ENCODE measurements at regions of chr20 and their contacts with region 1.

Region 1: DNA sequence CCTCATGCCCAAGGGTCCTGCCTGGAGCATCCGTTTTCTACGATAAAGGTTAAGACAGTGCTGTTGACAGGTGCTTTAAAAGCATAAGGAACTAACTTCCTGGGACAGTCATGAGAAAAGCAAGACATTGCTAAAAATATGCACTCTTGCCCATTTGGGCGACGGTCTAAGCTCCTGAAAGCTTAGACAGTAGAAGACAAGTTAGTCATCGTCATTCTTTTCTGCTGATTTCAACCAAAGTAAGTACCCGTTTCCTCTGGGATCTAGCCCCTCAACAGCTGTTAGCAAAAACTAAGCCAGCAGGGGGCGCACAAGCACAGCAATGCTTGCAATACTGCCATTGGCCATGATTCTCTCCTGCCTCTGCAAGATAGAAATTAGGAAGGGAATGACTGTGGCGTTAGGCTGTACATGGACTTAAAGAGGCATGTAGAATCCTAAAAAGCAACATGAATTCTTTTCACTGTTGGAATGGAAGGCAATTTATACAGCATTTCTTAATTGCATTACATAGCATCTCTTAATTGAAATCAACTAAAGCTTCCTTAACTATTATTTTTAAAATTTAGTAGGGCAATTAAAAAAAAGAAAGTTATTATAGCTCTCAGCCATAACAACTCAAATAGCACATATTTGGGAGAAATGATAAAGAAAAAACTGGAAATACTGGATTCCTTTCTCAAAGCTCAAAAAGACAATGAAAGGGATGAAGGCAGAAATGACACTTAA is 147.8 kb upstream of the RALGAPA2 start:
- DNase-seq: peak; percentile 87 to 92
- ATAC-seq: peak; percentile 93 to 97
- H3K4me3 ChIP-seq: no peak overlapping the region
- H3K27ac ChIP-seq: no peak overlapping the region
- H3K4me1 ChIP-seq: no peaks in the 10 kb centered on the region
- CTCF ChIP-seq: peak; percentile 95
- EP300 ChIP-seq: no peak
- POLR2A ChIP-seq: no peak
- RAD21 ChIP-seq: peak; percentile 81 to 88

Region 2: DNA sequence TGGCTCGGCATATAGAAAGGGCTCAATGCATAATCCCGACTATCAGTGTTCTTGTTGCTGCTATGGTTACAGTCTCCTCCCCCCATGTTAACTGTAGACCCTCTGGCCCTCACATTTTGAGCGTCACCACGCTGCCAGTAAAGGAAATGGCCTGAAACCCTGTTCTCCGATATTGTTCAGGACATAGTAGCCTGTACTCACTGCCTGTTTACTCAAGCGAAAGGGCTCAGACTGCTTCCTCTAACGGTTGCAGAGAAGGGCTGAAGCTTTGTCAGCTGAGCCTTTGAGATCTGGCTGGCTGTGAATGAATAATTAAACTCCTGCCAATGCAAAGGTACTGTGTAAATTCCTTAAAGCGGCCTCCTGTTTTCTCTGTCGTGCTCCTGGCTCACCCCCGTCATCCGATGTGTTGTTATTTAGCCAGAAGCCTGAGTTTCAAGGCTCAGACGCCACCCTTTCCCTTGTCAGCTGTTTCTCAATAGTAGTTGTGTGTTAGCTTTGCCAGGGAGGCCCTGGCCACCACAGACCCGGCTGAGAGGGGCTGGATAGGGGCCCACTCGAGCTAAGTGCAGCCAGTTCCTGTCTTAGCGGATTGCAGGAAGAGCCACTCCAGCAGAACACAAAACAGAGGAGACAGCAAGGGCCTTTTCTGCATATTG is 116.6 kb before region 1 on chr20:
- CTCF ChIA-PET with region 1: no interaction called
- POLR2A ChIA-PET with region 1: no interaction called
- DNase-seq: no peak
- ATAC-seq: no peak
- H3K4me3 ChIP-seq: no peak overlapping the region
- H3K27ac ChIP-seq: no peak overlapping the region
- H3K4me1 ChIP-seq: no peaks in the 10 kb centered on the region
- CTCF ChIP-seq: no peak
- EP300 ChIP-seq: no peak
- POLR2A ChIP-seq: no peak
- RAD21 ChIP-seq: no peak

Region 3: GRCh38 chr20:20837574-20838021 is 22.6 kb before region 1 on chr20:
- CTCF ChIA-PET with region 1: interaction called, 53 read pairs
- POLR2A ChIA-PET with region 1: no interaction called
- DNase-seq: peak; percentile 59 to 65
- ATAC-seq: peak; percentile 80 to 89; a peak in 5 of 6 replicates
- H3K4me3 ChIP-seq: no peak overlapping the region
- H3K27ac ChIP-seq: no peak overlapping the region
- H3K4me1 ChIP-seq: no peaks in the 10 kb centered on the region
- CTCF ChIP-seq: peak; percentile 85
- EP300 ChIP-seq: no peak
- POLR2A ChIP-seq: no peak
- RAD21 ChIP-seq: peak; percentile 85 to 89

Region 4: DNA sequence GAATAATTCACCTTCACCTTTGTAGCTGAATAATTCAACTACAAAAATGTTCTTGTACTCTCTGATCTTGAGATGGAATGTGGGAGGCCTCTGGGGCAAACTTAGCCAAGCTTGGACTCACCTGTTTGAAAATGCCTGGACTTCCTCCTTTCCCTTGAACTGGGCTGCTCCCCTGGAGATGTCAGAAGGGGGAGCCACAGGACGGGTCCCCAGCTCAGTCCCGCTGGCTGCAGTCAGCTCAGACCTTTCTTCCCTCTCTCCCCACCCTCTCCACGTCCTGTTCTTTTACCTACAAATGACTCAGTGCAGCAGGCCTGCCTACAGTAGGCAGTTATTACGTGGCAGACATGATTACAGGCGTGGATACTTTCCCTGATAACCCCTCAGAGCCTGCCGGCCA is 16.3 kb before region 1 on chr20:
- CTCF ChIA-PET with region 1: interaction called, 53 read pairs
- POLR2A ChIA-PET with region 1: no interaction called
- DNase-seq: no peak
- ATAC-seq: peak in 1 of 2 experiments; percentile 53; a peak in 2 of 6 replicates
- H3K4me3 ChIP-seq: no peak overlapping the region
- H3K27ac ChIP-seq: no peak overlapping the region
- H3K4me1 ChIP-seq: no peaks in the 10 kb centered on the region
- CTCF ChIP-seq: no peak
- EP300 ChIP-seq: no peak
- POLR2A ChIP-seq: no peak
- RAD21 ChIP-seq: no peak

Region 5: DNA sequence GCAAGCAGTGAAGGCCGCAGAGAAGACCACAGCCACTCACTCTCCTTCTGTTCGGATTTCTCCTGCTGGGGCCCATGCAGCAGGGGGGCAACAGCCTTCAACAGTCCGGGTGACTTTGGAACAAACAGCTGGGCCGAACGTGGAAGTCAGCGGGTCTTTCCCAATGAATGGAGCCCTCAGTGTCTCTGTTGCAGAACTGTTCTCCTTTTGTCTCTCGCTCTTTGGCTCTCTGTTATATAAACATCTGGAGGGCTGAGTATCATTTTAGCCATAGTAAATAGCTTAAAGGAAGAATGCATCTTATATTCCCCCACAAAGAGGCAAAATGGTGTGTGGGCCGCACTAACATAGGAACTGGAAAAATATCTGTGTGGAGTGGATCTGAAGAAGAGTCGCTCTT is 11.1 kb before region 1 on chr20:
- CTCF ChIA-PET with region 1: interaction called, 48 read pairs
- POLR2A ChIA-PET with region 1: no interaction called
- DNase-seq: no peak
- ATAC-seq: no peak
- H3K4me3 ChIP-seq: no peak overlapping the region
- H3K27ac ChIP-seq: no peak overlapping the region
- H3K4me1 ChIP-seq: no peaks in the 10 kb centered on the region
- CTCF ChIP-seq: no peak
- EP300 ChIP-seq: no peak
- POLR2A ChIP-seq: no peak
- RAD21 ChIP-seq: no peak

Region 6: GRCh38 chr20:20875716-20876115 is 15.5 kb after region 1 on chr20:
- CTCF ChIA-PET with region 1: interaction called, 28 read pairs
- POLR2A ChIA-PET with region 1: no interaction called
- DNase-seq: no peak
- ATAC-seq: no peak
- H3K4me3 ChIP-seq: no peak overlapping the region
- H3K27ac ChIP-seq: no peak overlapping the region
- H3K4me1 ChIP-seq: no peaks in the 10 kb centered on the region
- CTCF ChIP-seq: no peak
- EP300 ChIP-seq: no peak
- POLR2A ChIP-seq: no peak
- RAD21 ChIP-seq: no peak

Region 7: DNA sequence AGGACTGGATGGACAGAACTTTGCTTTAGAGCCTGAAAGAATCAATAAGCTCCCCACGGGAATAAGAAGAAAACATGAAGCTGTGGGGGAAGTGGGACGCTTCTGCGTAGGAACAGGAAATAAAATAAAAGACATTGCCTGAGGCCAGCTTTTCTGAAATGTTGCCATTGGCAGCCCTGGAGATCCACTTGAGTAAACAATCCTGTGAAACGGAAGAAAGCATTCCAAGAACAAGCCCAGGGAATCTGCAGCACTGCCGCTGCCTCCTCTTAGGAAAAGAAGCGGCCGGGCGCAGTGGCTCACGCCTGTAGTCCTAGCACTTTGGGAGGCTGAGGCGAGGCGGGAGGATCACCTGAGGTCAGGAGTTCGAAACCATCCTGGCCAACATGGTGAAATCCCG is 34.5 kb after region 1 on chr20:
- CTCF ChIA-PET with region 1: interaction called, 10 read pairs
- POLR2A ChIA-PET with region 1: no interaction called
- DNase-seq: peak in 1 of 2 experiments; percentile 55
- ATAC-seq: peak; percentile 43 to 61; a peak in 4 of 6 replicates
- H3K4me3 ChIP-seq: no peak overlapping the region
- H3K27ac ChIP-seq: no peak overlapping the region
- H3K4me1 ChIP-seq: no peaks in the 10 kb centered on the region; the same call in 2 of the 3 replicates
- CTCF ChIP-seq: no peak
- EP300 ChIP-seq: no peak
- POLR2A ChIP-seq: no peak
- RAD21 ChIP-seq: no peak

Region 8: DNA sequence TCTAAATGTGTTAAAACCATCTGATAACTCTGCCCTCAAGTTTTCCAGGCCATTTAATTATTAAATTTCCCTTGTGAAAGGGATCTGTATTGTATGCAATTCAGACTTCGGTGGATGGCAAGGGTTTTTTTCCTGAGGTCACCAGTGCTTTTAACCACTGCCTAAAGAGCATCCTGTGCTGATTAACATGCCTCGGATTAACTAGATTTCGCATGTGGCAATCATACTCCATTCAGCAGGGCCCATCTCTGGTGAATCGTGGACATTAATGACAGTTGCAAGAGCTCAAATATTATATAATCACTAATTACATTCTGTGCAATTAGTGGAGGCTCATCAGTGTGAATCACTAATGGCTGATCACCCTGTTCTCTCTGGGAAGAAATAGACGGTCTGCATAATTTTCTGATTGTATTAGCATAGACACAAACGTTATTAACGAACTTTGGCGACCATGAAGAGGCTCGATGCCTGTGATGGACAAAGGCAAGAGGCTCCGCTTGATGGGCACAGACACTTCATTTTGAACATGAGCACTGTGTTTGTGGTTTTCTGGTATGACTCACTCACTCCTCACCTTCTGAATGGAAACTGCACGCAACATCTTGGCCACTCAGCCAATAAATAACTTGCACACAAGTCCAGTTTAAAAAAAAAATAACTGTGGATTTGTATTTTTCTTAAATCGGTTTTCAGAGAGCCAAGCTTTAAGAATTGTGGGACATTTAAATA is 214.5 kb after region 1 on chr20:
- CTCF ChIA-PET with region 1: no interaction called
- POLR2A ChIA-PET with region 1: no interaction called
- DNase-seq: no peak
- ATAC-seq: peak in 1 of 2 experiments; percentile 54; a peak in 1 of 6 replicates
- H3K4me3 ChIP-seq: no peak overlapping the region
- H3K27ac ChIP-seq: no peak overlapping the region
- H3K4me1 ChIP-seq: no peaks in the 10 kb centered on the region
- CTCF ChIP-seq: no peak
- EP300 ChIP-seq: no peak
- POLR2A ChIP-seq: no peak
- RAD21 ChIP-seq: no peak

Region 9: GRCh38 chr20:21125849-21126580 is 265.8 kb after region 1 on chr20 and contains the start of gene KIZ:
- CTCF ChIA-PET with region 1: interaction called, 22 read pairs
- POLR2A ChIA-PET with region 1: no interaction called
- DNase-seq: peak; percentile 83 to 97
- ATAC-seq: peak; percentile 94 to 99
- H3K4me3 ChIP-seq: peak within 1 kb of the TSS; percentile 89
- H3K27ac ChIP-seq: peak within 1 kb of the TSS; percentile 82 to 93
- H3K4me1 ChIP-seq: peaks cover 10% of the 10 kb centered on the region
- CTCF ChIP-seq: no peak
- EP300 ChIP-seq: no peak
- POLR2A ChIP-seq: peak; percentile 95
- RAD21 ChIP-seq: peak in 1 of 2 experiments; percentile 12; a peak in 1 of 5 replicates
- polyA plus RNA-seq, gene KIZ: 19.1 and 21.1 TPM in 2 replicates

Region 10: GRCh38 chr20:21251278-21251677 is 391.0 kb after region 1 on chr20:
- CTCF ChIA-PET with region 1: no interaction called
- POLR2A ChIA-PET with region 1: no interaction called
- DNase-seq: no peak
- ATAC-seq: no peak
- H3K4me3 ChIP-seq: no peak overlapping the region
- H3K27ac ChIP-seq: no peak overlapping the region
- H3K4me1 ChIP-seq: no peaks in the 10 kb centered on the region
- CTCF ChIP-seq: no peak
- EP300 ChIP-seq: no peak
- POLR2A ChIP-seq: no peak
- RAD21 ChIP-seq: no peak